PC-3 (cell line): ENCODE measurements at regions of chr14 and their contacts with region 1.

Region 1: DNA sequence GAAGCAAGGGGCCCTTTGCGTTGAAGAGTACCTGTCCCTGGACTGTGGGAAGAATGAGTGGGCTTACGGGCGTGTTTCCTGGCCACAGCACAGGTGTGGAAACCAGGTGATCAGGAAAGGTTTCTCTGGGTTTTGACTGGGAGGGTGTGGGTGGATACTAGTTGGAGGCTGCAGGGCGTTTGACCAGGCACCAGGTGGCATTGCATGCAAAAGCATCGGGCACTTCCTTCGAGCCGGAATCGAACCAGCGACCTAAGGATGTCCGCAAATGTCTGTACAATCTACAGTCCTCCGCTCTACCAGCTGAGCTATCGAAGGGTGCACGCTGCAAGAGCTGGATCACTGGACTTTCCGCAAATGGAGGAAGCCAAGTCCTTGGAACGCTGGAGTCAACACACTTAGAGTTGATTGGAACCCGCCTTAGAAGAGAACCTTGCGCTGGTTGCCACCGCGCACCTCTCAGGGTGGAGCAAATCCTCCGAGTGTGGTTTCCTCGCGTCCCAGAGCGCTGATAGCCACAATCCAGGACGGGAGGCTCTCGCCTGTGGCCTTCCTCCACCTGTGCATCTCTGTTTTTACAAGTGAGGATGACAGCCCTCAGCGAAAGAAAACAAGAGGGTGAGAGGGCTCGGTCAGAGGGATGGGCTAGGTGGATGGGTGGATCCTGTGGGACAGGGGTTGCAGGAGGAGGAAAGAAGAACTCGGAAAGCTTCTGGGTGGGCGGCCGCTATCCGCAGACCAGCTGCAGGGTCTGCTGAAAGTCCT is 21.2 kb upstream of the RNASE4 start:
- DNase-seq: peak; percentile 90
- ATAC-seq: peak; percentile 90
- H3K4me3 ChIP-seq: peak overlapping the region; percentile 70
- H3K27ac ChIP-seq: no peak overlapping the region
- H3K4me1 ChIP-seq: no peaks in the 10 kb centered on the region; the same call in 1 of the 2 replicates
- H3K27me3 ChIP-seq: no peaks in the 10 kb centered on the region
- CTCF ChIP-seq: peak; percentile 88

Region 2: DNA sequence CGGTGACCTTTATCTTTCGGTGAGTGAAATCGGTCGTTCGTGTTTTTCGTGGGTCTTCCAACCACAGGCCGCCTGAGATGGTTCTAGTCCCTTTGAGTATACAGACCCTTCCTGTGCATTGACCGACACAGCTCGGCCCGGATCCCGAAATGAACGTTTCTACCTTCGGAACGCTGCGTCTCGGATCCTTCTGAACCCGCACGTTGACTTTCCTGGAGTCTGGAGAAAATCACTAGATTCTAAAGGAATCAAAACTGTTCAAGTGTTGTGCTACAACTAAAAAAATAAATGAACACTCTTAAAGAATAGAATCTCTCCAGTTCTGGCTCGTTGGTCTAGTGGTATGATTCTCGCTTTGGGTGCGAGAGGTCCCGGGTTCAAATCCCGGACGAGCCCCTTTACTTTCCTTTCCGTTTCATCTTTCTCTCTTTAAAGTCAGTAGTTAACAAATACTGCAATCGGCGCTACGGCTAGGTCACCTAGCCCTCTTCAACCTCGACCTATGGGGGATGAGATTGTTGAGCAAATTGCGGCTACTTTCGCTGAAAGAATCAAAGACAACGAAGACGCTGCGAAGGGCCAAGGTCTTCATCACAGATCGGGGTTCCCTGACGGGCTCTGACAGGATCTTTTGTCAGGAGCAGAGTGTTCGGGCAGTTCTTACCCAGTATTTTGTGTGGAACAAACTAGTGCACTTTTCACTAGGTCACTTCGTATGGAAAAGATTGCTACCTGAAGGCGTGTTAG is 30.3 kb before region 1 on chr14:
- CTCF ChIA-PET with region 1: no interaction called
- POLR2A ChIA-PET with region 1: no interaction called
- intact Hi-C with region 1: loop called (anchors 1 kb)
- DNase-seq: peak; percentile 91
- ATAC-seq: peak; percentile 66
- H3K4me3 ChIP-seq: peak overlapping the region; percentile 70
- H3K27ac ChIP-seq: no peak overlapping the region
- H3K4me1 ChIP-seq: peaks cover 12% of the 10 kb centered on the region; the same call in 1 of the 2 replicates
- H3K27me3 ChIP-seq: no peaks in the 10 kb centered on the region
- CTCF ChIP-seq: no peak

Region 3: GRCh38 chr14:20690848-20691523 is 27.8 kb after region 1 on chr14:
- CTCF ChIA-PET with region 1: interaction called, 7 read pairs
- POLR2A ChIA-PET with region 1: no interaction called
- intact Hi-C with region 1: loop called (anchors 1 kb)
- DNase-seq: peak; percentile 86
- ATAC-seq: peak; percentile 89
- H3K4me3 ChIP-seq: peak overlapping the region; percentile 55
- H3K27ac ChIP-seq: no peak overlapping the region
- H3K4me1 ChIP-seq: no peaks in the 10 kb centered on the region
- H3K27me3 ChIP-seq: no peaks in the 10 kb centered on the region
- CTCF ChIP-seq: peak; percentile 92

Region 4: GRCh38 chr14:20774338-20774737 is 111.2 kb after region 1 on chr14:
- CTCF ChIA-PET with region 1: no interaction called
- POLR2A ChIA-PET with region 1: no interaction called
- intact Hi-C with region 1: no loop called
- DNase-seq: no peak
- ATAC-seq: no peak
- H3K4me3 ChIP-seq: no peak overlapping the region
- H3K27ac ChIP-seq: no peak overlapping the region
- H3K4me1 ChIP-seq: no peaks in the 10 kb centered on the region
- H3K27me3 ChIP-seq: peaks cover 66% of the 10 kb centered on the region
- CTCF ChIP-seq: no peak

Region 5: GRCh38 chr14:21120686-21121085 is 457.5 kb after region 1 on chr14:
- CTCF ChIA-PET with region 1: no interaction called
- POLR2A ChIA-PET with region 1: no interaction called
- intact Hi-C with region 1: no loop called
- DNase-seq: no peak
- ATAC-seq: no peak
- H3K4me3 ChIP-seq: no peak overlapping the region
- H3K27ac ChIP-seq: no peak overlapping the region
- H3K4me1 ChIP-seq: 0 out of 2 replicates have a peak, but pooled peaks cover 4% of the 10 kb centered on the region
- H3K27me3 ChIP-seq: peaks cover 26% of the 10 kb centered on the region
- CTCF ChIP-seq: no peak